Naive thymus-derived CD4-positive, alpha-beta T cell (primary cell): ENCODE measurements at regions of chr14 and their contacts with region 1.

Region 1: DNA sequence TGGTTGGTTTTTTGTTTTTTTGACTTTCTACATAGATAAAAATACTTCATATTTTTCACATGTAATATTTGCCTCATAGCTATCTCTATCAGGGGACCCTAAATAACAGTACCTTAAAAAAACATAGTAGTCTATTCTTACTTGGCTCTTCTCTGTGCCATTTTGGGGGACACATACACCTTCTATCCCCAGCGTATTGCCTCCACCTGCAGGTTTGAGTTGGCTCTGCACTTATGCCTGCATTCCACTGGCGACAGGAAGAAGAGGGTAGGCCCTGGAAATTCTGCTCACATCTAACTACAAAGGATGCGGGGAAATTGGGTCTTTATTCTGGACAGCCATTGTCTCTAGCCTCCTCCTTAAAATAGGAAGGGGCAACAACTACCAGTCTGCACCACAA is 13.8 kb upstream of the IFI27L2 start:
- DNase-seq: no peak
- ATAC-seq: no peak
- H3K4me3 ChIP-seq: no peak overlapping the region
- H3K4me3 Mint-ChIP-seq: no peak overlapping the region
- H3K27ac ChIP-seq: no peak overlapping the region
- H3K27ac Mint-ChIP-seq: no peak overlapping the region
- H3K4me1 ChIP-seq: peaks cover 0 to 6% of the 10 kb centered on the region in 2 donors
- H3K4me1 Mint-ChIP-seq: peaks cover 3 to 17% (median 15%) of the 10 kb centered on the region in 7 donors
- H3K27me3 ChIP-seq: no peaks in the 10 kb centered on the region
- H3K27me3 Mint-ChIP-seq: peaks cover 0 to 13% (median 0%) of the 10 kb centered on the region in 5 donors

Region 2: GRCh38 chr14:93772263-93772662 is 371.0 kb before region 1 on chr14:
- CTCF ChIA-PET with region 1: no interaction called
- POLR2A ChIA-PET with region 1: no interaction called
- intact Hi-C with region 1: no loop called
- DNase-seq: no peak
- ATAC-seq: no peak
- H3K4me3 ChIP-seq: no peak overlapping the region
- H3K4me3 Mint-ChIP-seq: no peak overlapping the region
- H3K27ac ChIP-seq: no peak overlapping the region
- H3K27ac Mint-ChIP-seq: no peak overlapping the region
- H3K4me1 ChIP-seq: no peaks in the 10 kb centered on the region
- H3K4me1 Mint-ChIP-seq: no peaks in the 10 kb centered on the region
- H3K27me3 ChIP-seq: no peaks in the 10 kb centered on the region
- H3K27me3 Mint-ChIP-seq: peaks cover 0 to 31% (median 8%) of the 10 kb centered on the region in 5 donors

Region 3: GRCh38 chr14:94161981-94162380 is 18.7 kb after region 1 on chr14:
- CTCF ChIA-PET with region 1: interaction called, 4 read pairs
- POLR2A ChIA-PET with region 1: interaction called, 3 read pairs
- intact Hi-C with region 1: loop called in 1 of 2 experiments (anchors 2 kb)
- DNase-seq: no peak
- ATAC-seq: no peak
- H3K4me3 ChIP-seq: no peak overlapping the region
- H3K4me3 Mint-ChIP-seq: peak overlapping the region in 5 of 10 donors; percentile 2 to 50 (median 12)
- H3K27ac ChIP-seq: no peak overlapping the region
- H3K27ac Mint-ChIP-seq: peak overlapping the region in 8 of 9 donors; percentile 30 to 75 (median 67)
- H3K4me1 ChIP-seq: peaks cover 12 to 47% of the 10 kb centered on the region in 2 donors
- H3K4me1 Mint-ChIP-seq: peaks cover 24 to 74% (median 62%) of the 10 kb centered on the region in 7 donors
- H3K27me3 ChIP-seq: no peaks in the 10 kb centered on the region
- H3K27me3 Mint-ChIP-seq: peaks cover 0 to 3% (median 0%) of the 10 kb centered on the region in 5 donors

Region 4: GRCh38 chr14:94180655-94181271 is 37.5 kb after region 1 on chr14:
- CTCF ChIA-PET with region 1: interaction called, 90 read pairs
- POLR2A ChIA-PET with region 1: interaction called, 5 read pairs
- intact Hi-C with region 1: no loop called
- DNase-seq: peak in 7 of 9 donors; percentile 57 to 81 (median 71)
- ATAC-seq: peak; percentile 93
- H3K4me3 ChIP-seq: peak overlapping the region; percentile 5
- H3K4me3 Mint-ChIP-seq: peak overlapping the region in 8 of 10 donors; percentile 6 to 75 (median 50)
- H3K27ac ChIP-seq: peak overlapping the region; percentile 56
- H3K27ac Mint-ChIP-seq: peak overlapping the region in 8 of 9 donors; percentile 16 to 90 (median 74)
- H3K4me1 ChIP-seq: peaks cover 0 to 1% of the 10 kb centered on the region in 2 donors
- H3K4me1 Mint-ChIP-seq: peaks cover 10 to 23% (median 18%) of the 10 kb centered on the region in 7 donors
- H3K27me3 ChIP-seq: no peaks in the 10 kb centered on the region
- H3K27me3 Mint-ChIP-seq: peaks cover 0 to 36% (median 0%) of the 10 kb centered on the region in 5 donors

Region 5: DNA sequence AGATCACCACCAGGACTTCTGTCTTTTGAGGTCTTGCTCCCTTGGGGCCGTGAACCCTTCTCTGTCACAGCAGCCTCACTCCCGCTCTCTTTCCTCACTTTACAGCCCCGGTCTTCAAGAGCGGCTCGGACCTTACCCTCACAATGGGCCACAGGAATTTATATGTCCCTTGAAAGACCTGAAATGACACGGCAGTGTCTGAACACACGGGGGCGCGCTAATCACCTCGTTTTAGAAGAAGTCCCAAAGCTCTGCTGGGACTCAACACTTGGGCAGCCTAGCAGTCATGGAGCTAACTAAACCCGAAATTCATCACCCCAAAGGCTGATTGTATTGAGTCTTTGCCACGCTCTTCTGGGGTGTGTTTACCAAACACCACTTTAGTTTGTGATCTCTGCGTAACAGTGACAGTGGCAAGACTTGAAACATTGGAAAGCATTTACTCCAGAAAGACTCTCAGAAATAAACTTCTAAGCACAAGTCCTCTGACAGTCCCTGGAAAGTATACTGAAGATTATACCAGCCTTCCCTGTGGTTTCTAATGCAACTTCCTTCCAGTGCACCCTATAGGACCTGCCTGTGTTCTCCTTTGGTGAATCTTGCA is 280.3 kb after region 1 on chr14:
- CTCF ChIA-PET with region 1: no interaction called
- POLR2A ChIA-PET with region 1: no interaction called
- intact Hi-C with region 1: no loop called
- DNase-seq: peak in 1 of 9 donors; percentile 37
- ATAC-seq: peak; percentile 56
- H3K4me3 ChIP-seq: no peak overlapping the region
- H3K4me3 Mint-ChIP-seq: no peak overlapping the region
- H3K27ac ChIP-seq: no peak overlapping the region
- H3K27ac Mint-ChIP-seq: no peak overlapping the region
- H3K4me1 ChIP-seq: no peaks in the 10 kb centered on the region
- H3K4me1 Mint-ChIP-seq: peaks cover 0 to 2% (median 0%) of the 10 kb centered on the region in 7 donors
- H3K27me3 ChIP-seq: no peaks in the 10 kb centered on the region
- H3K27me3 Mint-ChIP-seq: peaks cover 24 to 48% (median 28%) of the 10 kb centered on the region in 5 donors